ENCODE measurements at regions of chr6 and their contacts with region 1.

Region 1: DNA sequence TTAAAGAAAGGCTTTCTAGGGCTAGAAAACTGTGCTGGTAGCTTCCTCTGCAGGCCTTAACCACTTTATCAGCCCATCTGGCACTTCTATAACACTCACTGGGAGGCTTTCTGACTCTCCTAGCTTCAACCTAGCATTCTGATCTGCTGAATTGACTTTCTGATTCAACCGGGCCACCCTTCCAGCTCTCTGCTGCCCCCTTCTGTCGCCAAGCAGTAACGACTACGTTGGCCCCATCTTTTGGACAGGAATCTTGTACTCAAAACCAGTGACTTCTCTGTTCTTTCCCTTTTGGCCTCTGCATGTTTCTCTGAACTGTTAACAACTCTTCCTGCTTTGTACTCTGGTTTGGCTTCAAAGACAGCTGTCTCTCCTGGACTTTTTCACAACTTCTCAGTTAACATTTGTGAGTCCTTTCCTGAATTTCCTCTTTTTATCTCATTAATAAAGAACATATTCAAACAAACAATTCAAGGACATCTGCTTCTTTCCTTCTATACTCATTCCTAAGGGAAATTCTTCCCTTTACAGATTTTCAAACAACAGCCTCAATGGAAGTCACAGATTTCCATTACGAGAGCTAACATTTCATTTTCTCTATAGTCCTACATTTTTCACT is 43.9 kb upstream of the FAM135A start:
- DNase-seq: peak; percentile 58 to 74
- H3K4me3 ChIP-seq: no peak overlapping the region
- H3K4me3 Mint-ChIP-seq: no peak overlapping the region
- H3K27ac Mint-ChIP-seq: no peak overlapping the region
- H3K4me1 ChIP-seq: no peaks in the 10 kb centered on the region
- H3K4me1 Mint-ChIP-seq: peaks cover 1% of the 10 kb centered on the region
- H3K27me3 ChIP-seq: no peaks in the 10 kb centered on the region
- H3K27me3 Mint-ChIP-seq: peaks cover 9% of the 10 kb centered on the region
- CTCF ChIP-seq: peak; percentile 75 to 94

Region 2: DNA sequence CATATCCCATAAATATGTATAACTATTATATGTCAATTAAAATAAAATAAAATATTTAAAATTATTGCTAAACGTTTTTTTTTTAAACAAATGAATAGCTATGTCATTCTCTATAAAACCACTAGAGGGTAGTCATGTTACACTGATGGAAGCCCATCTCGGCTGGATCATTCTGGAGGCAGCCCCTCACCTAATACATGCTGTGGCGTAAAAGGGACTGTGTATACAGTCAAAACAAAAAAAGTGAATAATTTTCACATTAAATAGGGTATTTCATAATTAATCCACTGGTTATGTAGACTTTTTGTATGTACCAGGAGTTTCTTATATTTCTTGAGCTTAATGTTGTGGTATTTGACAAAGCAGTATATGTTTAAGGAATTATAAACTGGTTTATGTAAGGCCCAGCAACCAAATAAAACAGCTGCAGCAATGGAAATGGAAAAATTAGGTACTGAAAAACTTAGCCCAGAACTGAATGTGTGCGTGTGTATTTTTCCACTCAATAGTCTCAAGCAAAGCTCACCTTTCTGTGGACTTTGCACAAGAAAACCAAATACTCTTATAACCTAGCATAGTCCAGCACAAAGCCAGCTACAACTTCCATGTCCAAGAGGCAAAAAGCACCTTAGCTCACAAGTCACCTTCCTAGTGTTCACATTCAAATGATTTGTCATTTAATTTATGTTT is 148.3 kb before region 1 on chr6:
- CTCF ChIA-PET with region 1: interaction called, 21 read pairs
- POLR2A ChIA-PET with region 1: no interaction called
- intact Hi-C with region 1: loop called (anchors 1 kb)
- DNase-seq: peak in 1 of 2 experiments; percentile 19
- H3K4me3 ChIP-seq: no peak overlapping the region
- H3K4me3 Mint-ChIP-seq: no peak overlapping the region
- H3K27ac Mint-ChIP-seq: no peak overlapping the region
- H3K4me1 ChIP-seq: no peaks in the 10 kb centered on the region
- H3K4me1 Mint-ChIP-seq: no peaks in the 10 kb centered on the region
- H3K27me3 ChIP-seq: no peaks in the 10 kb centered on the region
- H3K27me3 Mint-ChIP-seq: peaks cover 4% of the 10 kb centered on the region
- CTCF ChIP-seq: peak; percentile 60 to 74

Region 3: GRCh38 chr6:70310063-70310694 is 59.3 kb before region 1 on chr6:
- CTCF ChIA-PET with region 1: interaction called, 62 read pairs
- POLR2A ChIA-PET with region 1: no interaction called
- intact Hi-C with region 1: loop called (anchors 1 kb)
- DNase-seq: peak in 1 of 2 experiments; percentile 39
- H3K4me3 ChIP-seq: no peak overlapping the region
- H3K4me3 Mint-ChIP-seq: no peak overlapping the region
- H3K27ac Mint-ChIP-seq: no peak overlapping the region
- H3K4me1 ChIP-seq: no peaks in the 10 kb centered on the region
- H3K4me1 Mint-ChIP-seq: peaks cover 6% of the 10 kb centered on the region
- H3K27me3 ChIP-seq: no peaks in the 10 kb centered on the region
- H3K27me3 Mint-ChIP-seq: peaks cover 13% of the 10 kb centered on the region
- CTCF ChIP-seq: peak; percentile 19 to 52

Region 4: DNA sequence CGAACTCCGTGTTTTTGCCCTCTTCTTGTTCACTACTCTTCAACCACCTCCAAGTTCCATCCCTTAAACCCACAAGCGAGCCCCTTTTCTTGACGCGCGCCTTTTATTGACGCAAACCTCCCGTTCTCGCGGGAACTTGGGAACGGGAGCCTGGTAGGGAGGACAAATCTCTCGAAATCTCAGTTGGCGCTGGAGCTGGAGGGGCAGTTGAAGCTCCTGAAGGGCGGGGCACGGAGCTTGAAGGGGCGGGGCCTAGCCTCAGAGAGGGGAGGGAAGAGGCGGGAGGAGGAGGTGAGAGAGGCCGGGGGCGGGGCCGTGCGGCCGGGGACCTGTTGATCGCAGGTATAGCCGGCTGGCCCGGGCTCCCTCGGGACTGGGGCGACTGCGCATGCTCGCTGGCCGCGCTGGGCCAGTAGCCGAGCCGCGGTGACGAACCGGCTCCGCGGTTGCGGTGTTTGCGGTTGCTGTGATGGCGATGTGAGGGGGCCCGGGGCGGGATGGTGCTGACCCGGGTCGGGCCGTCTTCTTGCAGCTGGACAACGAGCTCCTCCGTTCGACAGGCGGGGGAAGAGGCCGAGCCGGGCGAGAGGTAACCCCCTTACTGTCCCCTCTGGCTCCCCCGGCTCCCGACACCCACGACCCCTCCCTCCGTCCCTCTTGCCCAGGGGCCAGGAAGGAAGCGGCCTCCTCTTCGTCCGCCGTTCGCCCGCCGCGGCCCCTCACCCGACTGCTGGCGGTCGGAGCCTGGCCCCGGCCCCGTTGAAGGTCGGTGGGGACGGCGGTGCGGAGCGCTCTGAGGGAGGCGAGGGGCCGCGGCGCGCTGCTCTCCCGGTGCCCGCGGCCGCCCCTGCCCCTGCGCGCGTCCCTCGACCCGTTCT is 43.9 kb after region 1 on chr6 and contains the start of gene FAM135A:
- CTCF ChIA-PET with region 1: interaction called, 10 read pairs
- POLR2A ChIA-PET with region 1: interaction called, 3 read pairs
- intact Hi-C with region 1: loop called (anchors 2 kb)
- DNase-seq: peak; percentile 99
- H3K4me3 ChIP-seq: peak within 1 kb of the TSS; percentile 64
- H3K4me3 Mint-ChIP-seq: peak within 1 kb of the TSS; percentile 94
- H3K27ac Mint-ChIP-seq: peak within 1 kb of the TSS; percentile 76
- H3K4me1 ChIP-seq: peaks cover 26% of the 10 kb centered on the region
- H3K4me1 Mint-ChIP-seq: peaks cover 8% of the 10 kb centered on the region
- H3K27me3 ChIP-seq: no peaks in the 10 kb centered on the region
- H3K27me3 Mint-ChIP-seq: no peaks in the 10 kb centered on the region
- CTCF ChIP-seq: no peak
- total RNA-seq, gene FAM135A: 18.7 and 21.4 TPM in 2 replicates

Region 5: DNA sequence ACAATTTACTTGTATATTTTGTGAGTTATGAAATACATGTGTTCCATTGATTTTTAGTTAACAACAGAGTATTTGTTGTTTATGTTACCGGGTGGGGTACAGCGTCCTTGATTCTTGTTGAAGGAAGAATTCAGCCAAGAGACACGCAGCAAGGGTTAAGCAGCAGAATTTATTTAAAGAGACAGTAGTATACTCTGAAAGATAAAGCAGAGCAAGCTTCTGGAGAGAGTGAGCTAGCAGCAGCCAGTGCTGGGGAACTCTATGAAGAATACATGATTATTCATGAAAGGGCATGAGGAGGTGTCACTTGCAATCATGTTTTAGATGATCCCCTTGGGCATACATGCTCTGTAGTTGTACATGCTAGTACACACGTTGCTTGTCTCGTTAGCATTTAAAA is 120.0 kb after region 1 on chr6:
- CTCF ChIA-PET with region 1: no interaction called
- POLR2A ChIA-PET with region 1: no interaction called
- intact Hi-C with region 1: loop called (anchors 1 kb)
- DNase-seq: no peak
- H3K4me3 ChIP-seq: no peak overlapping the region
- H3K4me3 Mint-ChIP-seq: no peak overlapping the region
- H3K27ac Mint-ChIP-seq: no peak overlapping the region
- H3K4me1 ChIP-seq: no peaks in the 10 kb centered on the region
- H3K4me1 Mint-ChIP-seq: no peaks in the 10 kb centered on the region
- H3K27me3 ChIP-seq: no peaks in the 10 kb centered on the region
- H3K27me3 Mint-ChIP-seq: no peaks in the 10 kb centered on the region
- CTCF ChIP-seq: no peak